ENCODE measurements at regions of chr10 and their contacts with region 1.

Region 1: DNA sequence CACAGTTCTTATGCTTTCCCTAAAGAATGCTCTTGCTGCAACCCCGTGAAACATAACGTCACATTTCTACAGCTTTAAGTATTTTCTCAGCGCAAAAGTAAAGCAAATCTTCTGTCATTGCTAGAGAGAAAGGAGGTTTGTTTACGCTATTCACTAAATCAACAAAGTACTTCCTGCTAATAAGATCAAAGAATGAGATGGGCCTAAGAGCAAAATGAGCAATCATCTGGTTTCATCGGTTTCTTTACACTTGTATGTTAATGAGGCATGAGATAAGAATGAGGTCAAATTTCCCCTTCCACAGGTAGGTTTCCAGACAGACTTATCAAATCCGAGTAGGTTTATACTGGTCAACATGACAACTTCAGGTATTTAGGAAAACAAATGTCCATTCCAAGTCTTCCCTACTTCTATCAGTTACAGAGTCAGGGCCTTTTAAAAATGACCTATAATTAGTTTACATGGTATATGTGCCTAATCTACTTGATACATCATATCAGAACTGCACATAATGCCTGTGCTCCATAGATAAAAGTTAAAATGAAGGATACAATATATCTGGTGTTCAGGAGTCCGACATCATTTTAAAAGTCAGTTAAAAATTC is 8.4 kb downstream of the USP6NL start:
- DNase-seq: peak; percentile 60
- ATAC-seq: no peak
- H3K4me3 ChIP-seq: no peak overlapping the region
- H3K27ac ChIP-seq: no peak overlapping the region
- H3K4me1 ChIP-seq: 0 out of 2 replicates have a peak, but pooled peaks cover 2% of the 10 kb centered on the region
- H3K27me3 ChIP-seq: no peaks in the 10 kb centered on the region
- CTCF ChIP-seq: no peak
- POLR2A ChIP-seq: no peak
- RAD21 ChIP-seq: no peak

Region 2: GRCh38 chr10:11569471-11569870 is 33.5 kb before region 1 on chr10:
- CTCF ChIA-PET with region 1: no interaction called
- POLR2A ChIA-PET with region 1: no interaction called
- dilution Hi-C with region 1: no loop called
- in situ Hi-C with region 1: no loop called
- intact Hi-C with region 1: loop called (anchors 5 kb)
- DNase-seq: no peak
- ATAC-seq: no peak
- H3K4me3 ChIP-seq: no peak overlapping the region
- H3K27ac ChIP-seq: no peak overlapping the region
- H3K4me1 ChIP-seq: no peaks in the 10 kb centered on the region
- H3K27me3 ChIP-seq: no peaks in the 10 kb centered on the region
- CTCF ChIP-seq: no peak
- POLR2A ChIP-seq: no peak
- RAD21 ChIP-seq: no peak

Measured in IMR-90 (cell line).